Activated CD4-positive, alpha-beta T cell treated with anti-CD3 and anti-CD28 coated beads for 36 hours (primary cell): ENCODE measurements at regions of chr17 and their contacts with region 1.

Region 1: DNA sequence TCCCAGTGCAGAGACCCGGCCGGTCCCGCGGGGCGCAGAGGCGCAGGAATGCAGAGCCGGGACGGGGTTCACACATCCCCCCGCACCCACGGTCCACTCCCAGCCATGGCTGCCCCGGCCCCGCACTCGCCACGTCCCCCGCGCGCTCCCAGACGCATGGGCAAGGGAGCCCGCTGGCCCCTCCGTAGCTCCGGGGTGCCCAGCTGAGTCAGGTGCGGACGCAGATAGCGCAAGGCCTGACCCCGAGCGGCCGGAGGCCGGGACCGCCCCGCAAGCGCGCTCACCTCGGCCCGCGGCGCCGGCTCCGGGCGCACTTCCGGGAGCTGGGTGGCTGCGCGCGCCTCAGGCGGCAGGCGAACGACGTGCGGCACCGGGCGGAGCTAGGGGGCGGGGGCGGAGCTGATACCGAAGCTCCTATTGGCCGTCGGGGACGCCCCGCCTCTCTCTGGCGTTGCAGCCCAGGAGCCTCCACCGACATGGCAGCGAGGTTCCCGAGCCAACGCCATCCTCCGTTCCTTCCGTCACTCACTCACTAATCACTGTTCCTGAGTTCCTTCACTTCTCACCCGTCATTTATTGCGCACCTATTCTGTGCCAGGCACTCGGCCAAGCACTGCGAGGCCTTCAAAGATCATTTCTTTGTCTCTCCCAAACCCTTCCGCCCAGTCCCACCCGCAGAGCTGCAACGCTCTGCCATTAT is at the start of gene ZNF18:
- DNase-seq: peak; percentile 98
- ATAC-seq: peak; percentile 99
- H3K4me3 Mint-ChIP-seq: peak within 1 kb of the TSS; percentile 78
- H3K27ac Mint-ChIP-seq: peak within 1 kb of the TSS; percentile 86
- H3K4me1 Mint-ChIP-seq: peaks cover 15% of the 10 kb centered on the region
- H3K27me3 Mint-ChIP-seq: no peaks in the 10 kb centered on the region
- total RNA-seq, gene ZNF18: 7.3 to 7.4 TPM

Region 2: GRCh38 chr17:12020642-12021622 is 23.6 kb after region 1 on chr17 and contains the start of gene MAP2K4:
- CTCF ChIA-PET with region 1: interaction called, 20 read pairs
- POLR2A ChIA-PET with region 1: interaction called, 25 read pairs
- intact Hi-C with region 1: loop called (anchors 1 kb)
- DNase-seq: peak; percentile 96
- ATAC-seq: peak; percentile 94
- H3K4me3 Mint-ChIP-seq: peak within 1 kb of the TSS; percentile 73
- H3K27ac Mint-ChIP-seq: peak within 1 kb of the TSS; percentile 58
- H3K4me1 Mint-ChIP-seq: peaks cover 52% of the 10 kb centered on the region
- H3K27me3 Mint-ChIP-seq: peaks cover 2% of the 10 kb centered on the region
- total RNA-seq, gene MAP2K4: 30.1 to 36.2 TPM